PC-9 (cell line): ENCODE measurements at regions of chr6 and their contacts with region 1.

Region 1: GRCh38 chr6:36874443-36875249 is at the start of gene PPIL1:
- DNase-seq: peak; percentile 79 to 81
- H3K4me3 ChIP-seq: peak within 1 kb of the TSS; percentile 78
- H3K27ac ChIP-seq: peak within 1 kb of the TSS; percentile 81
- H3K4me1 ChIP-seq: peaks cover 19% of the 10 kb centered on the region
- H3K27me3 ChIP-seq: no peaks in the 10 kb centered on the region
- CTCF ChIP-seq: no peak
- total RNA-seq, gene PPIL1: 19.0 and 28.4 TPM in 2 replicates

Region 2: GRCh38 chr6:36851149-36851614 is 23.5 kb before region 1 on chr6:
- CTCF ChIA-PET with region 1: no interaction called
- POLR2A ChIA-PET with region 1: no interaction called
- intact Hi-C with region 1: no loop called
- DNase-seq: peak; percentile 34 to 47
- H3K4me3 ChIP-seq: no peak overlapping the region
- H3K27ac ChIP-seq: no peak overlapping the region
- H3K4me1 ChIP-seq: peaks cover 22% of the 10 kb centered on the region
- H3K27me3 ChIP-seq: no peaks in the 10 kb centered on the region
- CTCF ChIP-seq: peak; percentile 93

Region 3: DNA sequence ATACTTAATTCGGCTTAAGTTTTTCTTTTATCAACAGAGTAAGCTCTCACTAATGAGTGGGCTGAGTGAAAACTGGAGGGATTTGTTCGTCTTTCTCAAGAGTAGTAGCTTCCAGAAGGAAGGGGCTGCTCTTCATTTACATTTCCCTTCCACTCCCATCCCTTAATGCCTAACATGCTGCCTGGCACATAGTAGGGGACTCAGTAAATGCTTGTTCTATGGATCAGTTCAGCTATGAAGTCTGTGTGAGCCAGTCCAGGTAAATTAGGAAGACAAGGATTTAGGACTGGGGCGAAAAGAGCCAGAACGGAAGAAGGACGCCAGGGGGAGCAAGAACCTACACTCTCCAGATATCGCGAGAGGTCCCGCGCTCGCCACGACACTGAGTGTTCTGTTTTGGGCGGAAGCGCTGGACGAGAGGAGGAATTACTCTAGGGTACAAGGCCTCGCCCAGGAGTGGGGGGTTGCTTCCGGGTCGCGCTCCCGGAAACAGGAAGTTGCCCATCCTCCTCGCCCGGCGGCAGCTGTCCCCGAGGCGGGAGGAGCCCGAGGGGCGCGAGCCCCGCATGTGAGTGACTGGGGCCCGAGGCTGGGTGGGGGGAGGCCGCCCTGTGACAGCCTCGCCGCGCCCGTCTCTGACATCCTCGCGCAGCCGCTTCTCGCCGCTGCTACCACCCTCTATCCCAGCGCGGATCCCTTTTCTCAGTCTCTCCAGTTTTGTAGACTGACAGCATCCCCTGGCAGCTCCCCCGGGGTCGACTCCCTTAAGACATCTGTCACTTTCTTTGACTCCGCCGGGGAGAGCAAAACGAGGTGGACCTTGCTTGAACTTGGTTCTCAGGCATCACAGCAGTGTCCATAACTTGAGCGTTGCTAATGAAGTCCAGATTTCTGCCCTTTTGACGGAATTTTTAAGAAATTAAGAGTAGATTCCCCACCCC is 11.1 kb after region 1 on chr6 and contains the start of gene C6orf89:
- CTCF ChIA-PET with region 1: interaction called, 9 read pairs
- POLR2A ChIA-PET with region 1: interaction called, 5 read pairs
- intact Hi-C with region 1: loop called (anchors 1 kb)
- DNase-seq: peak; percentile 91 to 92
- H3K4me3 ChIP-seq: peak within 1 kb of the TSS; percentile 67
- H3K27ac ChIP-seq: peak within 1 kb of the TSS; percentile 61
- H3K4me1 ChIP-seq: peaks cover 19% of the 10 kb centered on the region
- H3K27me3 ChIP-seq: no peaks in the 10 kb centered on the region
- CTCF ChIP-seq: peak; percentile 75
- total RNA-seq, gene C6orf89: 28.7 and 40.1 TPM in 2 replicates

Region 4: DNA sequence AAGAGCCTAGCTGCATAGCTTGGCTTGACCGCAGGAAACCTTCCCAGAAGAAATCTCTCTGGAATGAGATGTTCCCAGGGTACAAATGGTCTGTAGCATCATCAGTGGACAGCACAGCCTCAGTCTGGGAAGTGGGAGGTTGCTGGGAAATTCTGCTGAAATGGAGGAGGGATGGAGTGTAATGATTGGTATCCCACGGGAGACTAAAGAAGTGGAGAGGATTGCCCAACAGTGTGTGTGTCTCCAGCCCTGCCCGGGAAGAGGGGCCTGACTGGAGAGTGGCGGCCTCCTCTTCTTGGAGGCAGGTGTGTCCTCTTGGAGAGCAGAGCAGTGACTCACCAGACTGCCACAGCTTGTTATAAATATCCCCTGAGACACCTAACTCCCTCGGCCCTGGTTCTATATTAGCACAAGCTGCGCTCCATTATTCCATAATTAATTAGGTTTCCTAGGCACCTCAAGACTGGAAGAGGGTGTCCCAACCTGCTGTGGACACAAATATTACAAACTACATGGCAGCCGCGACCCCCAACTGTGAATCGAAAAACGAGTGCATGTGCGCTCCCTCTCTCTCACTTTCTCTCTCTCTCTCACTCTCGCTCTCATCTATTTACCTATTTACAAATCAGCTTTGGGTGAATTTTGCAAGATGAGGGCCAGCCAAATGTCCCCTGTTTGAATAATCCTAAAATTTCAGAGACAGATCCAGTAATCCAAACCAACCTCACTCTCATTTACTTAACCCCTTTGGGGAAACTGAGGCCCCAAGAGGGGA is 199.6 kb after region 1 on chr6:
- CTCF ChIA-PET with region 1: no interaction called
- POLR2A ChIA-PET with region 1: interaction called, 10 read pairs
- intact Hi-C with region 1: no loop called
- DNase-seq: peak; percentile 44 to 51
- H3K4me3 ChIP-seq: no peak overlapping the region
- H3K27ac ChIP-seq: no peak overlapping the region
- H3K4me1 ChIP-seq: peaks cover 44% of the 10 kb centered on the region
- H3K27me3 ChIP-seq: no peaks in the 10 kb centered on the region
- CTCF ChIP-seq: no peak